ENCODE measurements at regions of chr6 and their contacts with region 1.

Region 1: DNA sequence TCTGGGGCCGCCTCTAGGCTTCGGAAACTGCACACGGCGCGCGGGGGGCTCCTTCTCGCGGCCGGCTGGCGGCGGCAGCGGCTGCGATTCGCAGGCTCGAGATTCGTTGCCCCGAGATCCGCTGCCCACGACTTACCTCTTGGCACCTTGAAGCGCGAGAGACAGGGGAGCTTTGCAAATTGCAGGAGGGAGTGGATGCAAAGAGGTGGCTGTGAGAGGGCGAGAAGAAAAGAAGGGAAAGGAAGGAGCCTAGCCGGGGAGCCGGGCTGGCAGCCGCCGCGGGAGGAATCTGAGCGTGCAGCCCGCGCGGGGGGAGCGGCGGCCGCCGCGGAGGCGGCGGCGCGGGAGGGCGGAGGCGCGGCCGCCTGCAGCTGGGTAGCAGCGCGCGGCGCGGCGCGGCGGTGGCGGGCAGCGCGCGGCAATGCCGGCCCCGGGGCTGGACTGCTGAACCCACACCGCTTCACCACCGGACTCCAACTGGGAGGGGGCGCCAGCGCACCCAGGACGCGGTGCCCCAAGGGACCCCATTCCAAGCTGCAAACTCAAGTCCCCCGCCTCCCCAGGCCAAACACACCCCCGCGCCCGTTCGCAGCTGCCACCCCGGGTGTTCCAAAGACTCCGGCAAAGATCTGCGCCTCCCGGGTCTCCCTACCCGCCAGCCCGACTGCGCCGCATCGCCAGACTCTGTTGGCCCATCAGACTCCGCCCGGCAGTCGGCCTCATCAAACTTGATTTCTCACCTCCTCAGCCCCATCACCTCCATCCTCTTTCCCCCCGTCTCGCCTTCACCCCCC is 44.2 kb upstream of the SUPT3H start:
- DNase-seq: peak in 9 of 10 donors; percentile 44 to 75 (median 60)
- H3K4me3 ChIP-seq: peak overlapping the region; percentile 50 to 84 (median 68)
- H3K27ac ChIP-seq: peak overlapping the region in 52 of 59 donors; percentile 23 to 91 (median 80)
- H3K27me3 ChIP-seq: peaks cover 0 to 63% (median 34%) of the 10 kb centered on the region in 45 donors
- CTCF ChIP-seq: peak in 27 of 56 donors; percentile 7 to 54 (median 26)

Region 2: GRCh38 chr6:44475779-44476434 is 946.0 kb before region 1 on chr6:
- intact Hi-C with region 1: loop called in 1 of 2 experiments (anchors 10 kb)
- DNase-seq: peak; percentile 71 to 89 (median 81)
- H3K4me3 ChIP-seq: peak overlapping the region in 38 of 59 donors; percentile 11 to 48 (median 28)
- H3K27ac ChIP-seq: peak overlapping the region in 5 of 59 donors; percentile 34 to 65 (median 49)
- H3K27me3 ChIP-seq: no peaks in the 10 kb centered on the region
- CTCF ChIP-seq: peak; percentile 72 to 99 (median 94)

Region 3: DNA sequence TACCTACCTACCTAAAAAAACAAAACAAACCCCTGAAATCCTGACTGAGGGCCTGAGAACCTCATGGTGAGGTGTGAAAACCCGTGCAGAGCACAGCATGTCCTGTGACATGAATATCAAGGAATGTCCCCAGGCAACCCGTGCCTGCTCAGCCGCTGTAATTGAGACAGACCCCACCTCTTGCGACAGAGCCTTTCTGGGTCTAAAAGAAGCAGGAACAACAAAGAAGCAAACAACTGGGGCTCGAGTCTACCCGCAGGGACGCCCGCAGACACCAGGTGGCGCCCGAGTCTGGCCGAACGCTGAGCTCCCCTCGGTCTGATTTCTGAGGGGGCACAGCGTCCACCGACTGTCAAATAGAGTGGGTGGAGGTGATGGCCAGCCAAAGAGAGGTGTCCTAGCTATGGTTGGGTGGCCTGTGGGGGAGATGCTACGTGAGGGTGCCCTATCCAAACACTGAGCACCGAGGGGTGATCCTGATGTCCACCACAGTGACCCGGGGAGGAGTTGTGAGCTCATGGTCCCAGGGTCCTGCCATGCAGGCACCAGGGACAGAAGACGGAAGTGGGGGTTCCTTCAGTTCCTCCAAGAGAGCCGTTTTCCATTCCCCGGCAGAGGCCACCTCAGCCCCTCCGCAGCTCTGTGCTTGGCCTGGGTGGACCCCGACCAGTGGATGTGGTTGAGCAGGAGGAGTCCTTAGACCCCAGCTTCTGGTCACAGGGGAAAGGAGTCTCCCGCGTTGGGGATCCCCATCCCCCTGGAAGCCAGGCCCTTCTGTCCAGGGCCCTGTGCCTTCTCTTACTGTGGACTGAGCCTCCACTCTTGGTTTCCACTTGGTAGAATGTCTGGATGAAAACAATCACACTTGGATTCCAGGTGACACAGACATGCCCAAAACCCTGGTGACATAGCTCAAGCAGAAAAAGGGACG is 766.2 kb before region 1 on chr6:
- intact Hi-C with region 1: loop called (anchors 2 to 10 kb)
- DNase-seq: peak in 9 of 10 donors; percentile 47 to 83 (median 74)
- H3K4me3 ChIP-seq: peak overlapping the region in 3 of 59 donors; percentile 10 to 21 (median 13)
- H3K27ac ChIP-seq: no peak overlapping the region
- H3K27me3 ChIP-seq: no peaks in the 10 kb centered on the region
- CTCF ChIP-seq: peak; percentile 81 to 99 (median 94)

Region 4: GRCh38 chr6:45377554-45378333 is 44.2 kb before region 1 on chr6 and contains the start of gene SUPT3H:
- intact Hi-C with region 1: loop called (anchors 1 to 5 kb)
- DNase-seq: peak; percentile 74 to 94 (median 88)
- H3K4me3 ChIP-seq: peak within 1 kb of the TSS; percentile 62 to 96 (median 84)
- H3K27ac ChIP-seq: peak within 1 kb of the TSS; percentile 58 to 98 (median 93)
- H3K27me3 ChIP-seq: no peaks in the 10 kb centered on the region
- CTCF ChIP-seq: peak in 50 of 56 donors; percentile 8 to 60 (median 35)
- total RNA-seq, gene SUPT3H: 19.4 to 51.1 (median 30.3) TPM

Region 5: GRCh38 chr6:45479834-45480751 is 58.2 kb after region 1 on chr6:
- intact Hi-C with region 1: loop called in 1 of 2 experiments (anchors 2 kb)
- DNase-seq: no peak
- H3K4me3 ChIP-seq: peak overlapping the region in 53 of 59 donors; percentile 3 to 65 (median 43)
- H3K27ac ChIP-seq: peak overlapping the region in 47 of 59 donors; percentile 5 to 97 (median 69)
- H3K27me3 ChIP-seq: no peaks in the 10 kb centered on the region
- CTCF ChIP-seq: no peak

Region 6: GRCh38 chr6:45714741-45715507 is 293.0 kb after region 1 on chr6:
- intact Hi-C with region 1: loop called (anchors 5 kb)
- DNase-seq: peak in 4 of 10 donors; percentile 7 to 69 (median 25)
- H3K4me3 ChIP-seq: peak overlapping the region in 9 of 59 donors; percentile 0 to 21 (median 13)
- H3K27ac ChIP-seq: peak overlapping the region in 5 of 59 donors; percentile 12 to 57 (median 39)
- H3K27me3 ChIP-seq: peaks cover 0 to 8% (median 0%) of the 10 kb centered on the region in 45 donors
- CTCF ChIP-seq: peak; percentile 54 to 94 (median 80)

Region 7: GRCh38 chr6:45922728-45923351 is 500.9 kb after region 1 on chr6:
- intact Hi-C with region 1: loop called in 1 of 2 experiments (anchors 10 kb)
- DNase-seq: peak; percentile 46 to 82 (median 73)
- H3K4me3 ChIP-seq: peak overlapping the region in 1 of 59 donors; percentile 4
- H3K27ac ChIP-seq: no peak overlapping the region
- H3K27me3 ChIP-seq: no peaks in the 10 kb centered on the region
- CTCF ChIP-seq: peak; percentile 22 to 91 (median 76)

Measured in dorsolateral prefrontal cortex (tissue), 120 donors.